Mammary epithelial cell (primary cell): ENCODE measurements at regions of chr1 and their contacts with region 1.

Region 1: DNA sequence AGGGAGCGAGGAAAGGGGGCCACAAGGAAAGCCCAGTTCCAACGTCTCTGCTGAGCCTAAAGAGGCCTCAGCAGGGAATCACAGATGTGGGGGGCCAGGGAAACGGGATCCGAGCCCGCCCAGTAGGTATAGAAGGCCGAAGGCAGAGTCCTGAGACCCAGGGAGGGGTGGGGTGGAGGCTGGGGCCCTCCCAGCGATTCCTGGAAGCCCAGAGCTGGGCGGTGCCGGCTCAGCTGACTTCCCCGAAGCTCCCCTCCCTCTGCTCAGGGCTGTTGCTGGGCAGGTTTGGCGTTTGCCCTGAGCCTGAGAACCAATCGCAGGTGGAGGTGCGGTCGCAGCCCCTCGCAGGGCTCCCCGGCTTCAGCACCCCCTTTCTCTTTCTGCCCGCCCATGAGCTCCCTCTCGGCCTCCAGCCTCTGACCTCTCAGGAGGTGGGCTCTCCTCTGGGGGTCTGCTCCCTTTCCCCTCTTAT is 12.8 kb downstream of the ADAMTSL4 start:
- DNase-seq: peak; percentile 86
- H3K4me3 ChIP-seq: peak overlapping the region; percentile 42 to 57 (median 42)
- H3K27ac ChIP-seq: peak overlapping the region; percentile 99
- H3K4me1 ChIP-seq: peaks cover 69% of the 10 kb centered on the region
- H3K27me3 ChIP-seq: no peaks in the 10 kb centered on the region
- CTCF ChIP-seq: no peak

Region 2: GRCh38 chr1:150486964-150487762 is 74.8 kb before region 1 on chr1 and contains the start of gene TARS2:
- CTCF ChIA-PET with region 1: no interaction called
- dilution Hi-C with region 1: no loop called
- in situ Hi-C with region 1: no loop called
- intact Hi-C with region 1: loop called (anchors 1 kb)
- DNase-seq: peak; percentile 97
- H3K4me3 ChIP-seq: peak within 1 kb of the TSS; percentile 66 to 81 (median 69)
- H3K27ac ChIP-seq: peak within 1 kb of the TSS; percentile 83
- H3K4me1 ChIP-seq: peaks cover 16% of the 10 kb centered on the region
- H3K27me3 ChIP-seq: no peaks in the 10 kb centered on the region
- CTCF ChIP-seq: peak in 1 of 2 donors; percentile 29
- total RNA-seq, gene TARS2: 23.3 to 27.0 TPM

Region 3: GRCh38 chr1:150629115-150629928 is 67.3 kb after region 1 on chr1 and contains the start of gene ENSA:
- CTCF ChIA-PET with region 1: no interaction called
- dilution Hi-C with region 1: no loop called
- in situ Hi-C with region 1: loop called in 1 of 2 experiments (anchors 5 kb)
- intact Hi-C with region 1: loop called (anchors 1 kb)
- DNase-seq: peak; percentile 99
- H3K4me3 ChIP-seq: peak within 1 kb of the TSS; percentile 83 to 87 (median 83)
- H3K27ac ChIP-seq: peak within 1 kb of the TSS; percentile 91
- H3K4me1 ChIP-seq: peaks cover 47% of the 10 kb centered on the region
- H3K27me3 ChIP-seq: no peaks in the 10 kb centered on the region
- CTCF ChIP-seq: no peak
- total RNA-seq, gene ENSA: 62.5 to 178 TPM

Region 4: DNA sequence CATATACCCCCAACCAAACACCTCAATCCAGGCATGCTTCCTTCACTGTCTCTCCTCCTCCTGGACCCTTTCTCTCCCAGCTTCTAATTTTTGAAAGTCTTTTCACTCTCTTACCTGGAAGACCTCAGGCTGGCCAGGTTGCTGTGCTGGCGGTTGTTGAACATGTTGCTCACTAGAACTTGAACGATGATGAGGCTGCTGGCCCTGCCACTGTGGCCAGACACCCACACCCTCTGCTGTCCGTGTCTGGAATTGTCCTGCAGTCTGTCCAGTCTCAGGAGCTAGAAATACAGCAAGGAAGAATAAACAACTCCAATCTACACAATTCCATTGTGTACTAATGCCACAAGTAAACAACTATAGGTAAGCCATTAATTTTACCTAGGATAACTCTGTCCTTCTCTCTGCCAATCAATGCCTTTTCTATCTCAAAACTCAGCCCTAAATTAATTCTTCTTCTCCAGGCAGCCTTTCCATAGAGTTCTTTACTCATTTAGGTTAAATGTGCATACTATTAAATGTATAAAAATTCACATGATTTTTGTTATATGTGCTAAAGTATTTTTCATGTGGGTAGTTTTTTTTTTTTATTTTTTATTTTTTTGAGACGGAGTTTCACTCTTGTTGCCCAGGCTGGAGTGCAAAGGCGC is 251.2 kb after region 1 on chr1:
- CTCF ChIA-PET with region 1: no interaction called
- dilution Hi-C with region 1: no loop called
- in situ Hi-C with region 1: loop called (anchors 5 to 10 kb)
- intact Hi-C with region 1: loop called (anchors 1 kb)
- DNase-seq: peak; percentile 61
- H3K4me3 ChIP-seq: no peak overlapping the region
- H3K27ac ChIP-seq: no peak overlapping the region
- H3K4me1 ChIP-seq: peaks cover 14% of the 10 kb centered on the region
- H3K27me3 ChIP-seq: no peaks in the 10 kb centered on the region
- CTCF ChIP-seq: peak; percentile 90 to 95

Region 5: GRCh38 chr1:150979092-150980056 is 417.4 kb after region 1 on chr1:
- CTCF ChIA-PET with region 1: no interaction called
- dilution Hi-C with region 1: no loop called
- in situ Hi-C with region 1: no loop called
- intact Hi-C with region 1: loop called (anchors 2 kb)
- DNase-seq: peak; percentile 73
- H3K4me3 ChIP-seq: no peak overlapping the region
- H3K27ac ChIP-seq: no peak overlapping the region
- H3K4me1 ChIP-seq: peaks cover 47% of the 10 kb centered on the region
- H3K27me3 ChIP-seq: no peaks in the 10 kb centered on the region
- CTCF ChIP-seq: peak; percentile 100